Mammary epithelial cell (primary cell): ENCODE measurements at regions of chr13 and their contacts with region 1.

Region 1: GRCh38 chr13:24627099-24627714 is 53.0 kb upstream of the ATP12A start:
- DNase-seq: no peak
- H3K4me3 ChIP-seq: no peak overlapping the region
- H3K27ac ChIP-seq: no peak overlapping the region
- H3K4me1 ChIP-seq: peaks cover 21% of the 10 kb centered on the region
- H3K27me3 ChIP-seq: no peaks in the 10 kb centered on the region
- CTCF ChIP-seq: peak; percentile 70 to 81

Region 2: DNA sequence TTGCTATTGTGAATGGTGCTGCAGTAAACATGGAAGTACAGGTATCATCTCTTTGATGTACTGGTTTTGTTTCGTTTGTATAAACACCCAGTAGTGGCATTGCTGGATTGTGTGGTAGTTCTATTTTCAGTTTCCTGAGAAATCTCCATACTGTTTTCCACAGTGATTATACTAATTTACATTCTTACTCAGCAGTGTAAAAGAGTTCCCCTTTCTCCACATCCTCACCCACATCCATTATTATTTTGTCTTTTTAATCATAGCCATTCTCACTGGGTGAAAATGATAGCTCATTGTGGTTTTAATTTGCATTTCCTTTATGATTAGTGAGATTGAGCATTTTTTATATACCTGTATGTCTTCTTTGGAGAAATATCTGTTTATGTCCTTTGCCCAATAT is 52.4 kb before region 1 on chr13:
- CTCF ChIA-PET with region 1: no interaction called
- dilution Hi-C with region 1: no loop called
- in situ Hi-C with region 1: no loop called
- intact Hi-C with region 1: loop called (anchors 5 kb)
- DNase-seq: no peak
- H3K4me3 ChIP-seq: no peak overlapping the region
- H3K27ac ChIP-seq: no peak overlapping the region
- H3K4me1 ChIP-seq: no peaks in the 10 kb centered on the region
- H3K27me3 ChIP-seq: no peaks in the 10 kb centered on the region
- CTCF ChIP-seq: no peak

Region 3: GRCh38 chr13:24644036-24644435 is 16.8 kb after region 1 on chr13:
- CTCF ChIA-PET with region 1: no interaction called
- dilution Hi-C with region 1: no loop called
- in situ Hi-C with region 1: no loop called
- intact Hi-C with region 1: loop called (anchors 1 kb)
- DNase-seq: no peak
- H3K4me3 ChIP-seq: no peak overlapping the region
- H3K27ac ChIP-seq: no peak overlapping the region
- H3K4me1 ChIP-seq: peaks cover 3% of the 10 kb centered on the region
- H3K27me3 ChIP-seq: no peaks in the 10 kb centered on the region
- CTCF ChIP-seq: no peak